Thyroid gland (tissue), 4 donors: ENCODE measurements at regions of chr12 and their contacts with region 1.

Region 1: DNA sequence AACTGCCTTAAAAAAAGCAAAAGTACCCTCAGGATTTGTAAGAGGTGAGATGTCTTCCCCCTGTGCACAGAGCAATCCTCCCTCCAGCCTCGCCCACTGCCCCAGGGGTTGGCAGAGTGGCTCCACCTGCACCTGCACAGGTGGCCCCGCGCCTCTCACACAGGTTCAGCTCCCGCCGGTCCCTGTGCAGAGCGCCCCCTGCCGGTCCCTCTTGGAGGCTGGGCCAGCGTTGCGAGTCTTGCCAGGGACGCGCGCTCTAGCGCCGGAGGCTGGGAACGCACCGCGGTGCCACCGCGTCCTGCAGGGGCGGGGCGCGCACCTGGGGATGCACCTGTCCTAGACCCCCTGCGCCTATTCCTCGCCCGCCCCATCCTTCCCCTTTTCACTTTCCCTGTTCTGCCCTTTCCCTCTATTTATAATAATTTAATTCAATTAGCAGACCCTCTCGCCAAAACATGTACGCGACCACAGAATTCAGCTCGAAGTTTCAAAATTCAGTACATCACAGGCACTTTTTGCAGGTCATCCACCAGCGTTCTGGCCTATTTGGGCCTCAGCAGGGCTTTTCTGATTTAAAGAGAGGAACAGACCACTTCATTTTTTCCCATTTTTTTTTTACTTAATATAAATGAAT is 618.6 kb downstream of the AACS start:
- DNase-seq: peak; percentile 22 to 42
- H3K4me3 ChIP-seq: no peak overlapping the region
- H3K27ac ChIP-seq: no peak overlapping the region
- H3K4me1 ChIP-seq: no peaks in the 10 kb centered on the region
- H3K27me3 ChIP-seq: no peaks in the 10 kb centered on the region
- CTCF ChIP-seq: peak in 4 of 6 experiments; percentile 23 to 40 (median 28)
- POLR2A ChIP-seq: no peak

Region 2: GRCh38 chr12:125533434-125534029 is 150.3 kb before region 1 on chr12:
- intact Hi-C with region 1: loop called (anchors 10 kb)
- DNase-seq: peak; percentile 3 to 12
- H3K4me3 ChIP-seq: no peak overlapping the region
- H3K27ac ChIP-seq: no peak overlapping the region
- H3K4me1 ChIP-seq: peaks cover 0 to 3% of the 10 kb centered on the region in 2 donors
- H3K27me3 ChIP-seq: no peaks in the 10 kb centered on the region
- CTCF ChIP-seq: peak in 5 of 6 experiments; percentile 12 to 35 (median 24)
- POLR2A ChIP-seq: no peak

Region 3: DNA sequence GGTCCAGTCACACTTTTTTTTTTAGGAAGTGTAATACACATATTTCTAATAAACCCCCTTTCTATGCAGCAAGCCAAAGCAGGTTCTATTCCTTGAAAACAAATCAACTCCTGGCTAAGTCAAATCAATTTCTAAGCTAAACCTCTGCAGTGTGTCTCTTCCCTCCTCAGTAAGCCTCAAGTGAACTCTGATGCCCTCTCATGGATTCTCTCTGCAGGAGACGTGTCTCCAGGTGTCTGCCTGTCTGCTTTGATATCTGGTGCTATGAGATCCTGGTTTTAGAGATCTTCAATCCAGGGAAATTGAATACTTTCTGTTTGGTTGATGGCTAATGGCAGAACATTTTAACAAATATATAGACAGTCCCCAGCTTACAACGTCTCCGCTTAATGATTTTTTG is 173.0 kb after region 1 on chr12:
- intact Hi-C with region 1: no loop called
- DNase-seq: no peak
- H3K4me3 ChIP-seq: no peak overlapping the region
- H3K27ac ChIP-seq: no peak overlapping the region
- H3K4me1 ChIP-seq: no peaks in the 10 kb centered on the region
- H3K27me3 ChIP-seq: no peaks in the 10 kb centered on the region
- CTCF ChIP-seq: no peak
- POLR2A ChIP-seq: no peak